ENCODE measurements at regions of chr19 and their contacts with region 1.

Region 1: GRCh38 chr19:46265217-46265828 is 31.5 kb upstream of the HIF3A start:
- DNase-seq: peak; percentile 39 to 70 (median 53)
- H3K4me3 ChIP-seq: no peak overlapping the region
- H3K27ac ChIP-seq: no peak overlapping the region
- H3K4me1 ChIP-seq: no peaks in the 10 kb centered on the region
- H3K27me3 ChIP-seq: no peaks in the 10 kb centered on the region
- CTCF ChIP-seq: peak; percentile 62 to 81 (median 75)
- EP300 ChIP-seq: no peak
- POLR2A ChIP-seq: no peak

Region 2: GRCh38 chr19:45973578-45974338 is 291.6 kb before region 1 on chr19 and contains the start of gene NOVA2:
- intact Hi-C with region 1: no loop called
- DNase-seq: peak in 4 of 5 donors; percentile 43 to 60 (median 50)
- H3K4me3 ChIP-seq: no peak within 1 kb of the TSS
- H3K27ac ChIP-seq: no peak within 1 kb of the TSS
- H3K4me1 ChIP-seq: no peaks in the 10 kb centered on the region
- H3K27me3 ChIP-seq: no peaks in the 10 kb centered on the region
- CTCF ChIP-seq: no peak
- EP300 ChIP-seq: no peak
- POLR2A ChIP-seq: no peak
- total RNA-seq, gene NOVA2: 0.23 to 4.8 (median 2.2) TPM

Region 3: DNA sequence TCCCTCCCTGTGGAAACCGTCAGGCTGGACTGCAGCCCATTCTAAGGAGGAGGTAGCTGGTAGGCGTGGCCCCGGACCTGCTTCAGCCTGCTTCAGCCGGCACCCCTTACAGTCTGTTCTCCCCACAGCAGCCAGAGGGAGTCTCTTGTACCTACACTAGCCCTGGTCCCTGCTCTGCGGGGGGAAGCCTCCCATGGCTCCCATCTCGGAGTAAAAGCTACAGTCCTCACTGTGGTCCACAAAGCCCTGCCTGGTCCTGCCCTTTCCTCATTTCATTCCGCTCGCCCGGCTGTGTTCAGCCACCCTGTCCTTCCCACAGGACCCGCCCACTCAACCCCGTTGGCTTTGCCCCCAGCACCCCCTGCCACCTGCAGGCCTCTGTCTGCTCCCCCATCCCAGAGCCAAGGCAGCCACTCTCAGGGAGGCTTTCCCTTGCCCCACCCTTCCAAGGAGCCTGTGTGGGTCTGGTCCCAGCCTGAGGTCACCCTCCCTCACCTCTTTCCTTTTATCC is 243.7 kb before region 1 on chr19:
- intact Hi-C with region 1: loop called in 1 of 4 experiments (anchors 5 kb)
- DNase-seq: no peak
- H3K4me3 ChIP-seq: no peak overlapping the region
- H3K27ac ChIP-seq: no peak overlapping the region
- H3K4me1 ChIP-seq: no peaks in the 10 kb centered on the region
- H3K27me3 ChIP-seq: no peaks in the 10 kb centered on the region
- CTCF ChIP-seq: no peak
- EP300 ChIP-seq: no peak
- POLR2A ChIP-seq: no peak

Region 4: DNA sequence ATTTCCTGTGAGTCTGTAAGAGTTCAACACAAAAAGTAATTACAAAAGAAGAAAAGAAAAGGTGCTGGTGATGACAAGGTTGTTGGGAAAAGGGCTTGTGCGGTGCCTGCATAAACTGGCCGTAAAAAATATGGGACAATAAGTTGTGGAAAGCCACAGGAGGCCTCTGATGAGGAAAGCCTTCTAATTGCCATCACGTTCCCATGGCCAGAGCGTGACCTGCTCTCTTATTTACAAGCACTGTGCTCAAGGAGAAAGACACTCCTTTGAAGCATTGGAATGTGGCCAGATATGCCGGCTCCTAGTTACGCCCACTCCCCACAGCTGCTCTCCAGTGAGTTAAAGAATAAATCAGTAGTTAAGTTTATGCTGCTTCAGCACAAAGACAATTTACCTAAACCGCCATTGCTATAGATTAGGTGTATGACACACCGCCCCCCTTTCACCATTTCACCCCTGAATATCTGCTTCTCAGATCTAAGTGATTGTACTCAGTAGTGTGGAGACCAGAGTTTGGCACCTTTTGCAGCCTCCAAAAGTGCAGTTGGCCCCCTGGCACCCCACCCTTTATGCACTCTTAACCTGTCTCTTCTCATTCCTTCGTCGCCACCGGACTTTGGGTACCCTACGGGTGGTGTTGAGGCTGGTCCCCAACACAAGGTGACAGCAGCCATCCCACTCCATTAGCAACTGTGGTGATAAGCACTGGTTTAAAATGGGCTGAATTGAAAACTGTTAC is 234.3 kb before region 1 on chr19:
- intact Hi-C with region 1: loop called (anchors 2 to 5 kb)
- DNase-seq: no peak
- H3K4me3 ChIP-seq: no peak overlapping the region
- H3K27ac ChIP-seq: no peak overlapping the region
- H3K4me1 ChIP-seq: no peaks in the 10 kb centered on the region
- H3K27me3 ChIP-seq: no peaks in the 10 kb centered on the region
- CTCF ChIP-seq: no peak
- EP300 ChIP-seq: no peak
- POLR2A ChIP-seq: no peak

Region 5: DNA sequence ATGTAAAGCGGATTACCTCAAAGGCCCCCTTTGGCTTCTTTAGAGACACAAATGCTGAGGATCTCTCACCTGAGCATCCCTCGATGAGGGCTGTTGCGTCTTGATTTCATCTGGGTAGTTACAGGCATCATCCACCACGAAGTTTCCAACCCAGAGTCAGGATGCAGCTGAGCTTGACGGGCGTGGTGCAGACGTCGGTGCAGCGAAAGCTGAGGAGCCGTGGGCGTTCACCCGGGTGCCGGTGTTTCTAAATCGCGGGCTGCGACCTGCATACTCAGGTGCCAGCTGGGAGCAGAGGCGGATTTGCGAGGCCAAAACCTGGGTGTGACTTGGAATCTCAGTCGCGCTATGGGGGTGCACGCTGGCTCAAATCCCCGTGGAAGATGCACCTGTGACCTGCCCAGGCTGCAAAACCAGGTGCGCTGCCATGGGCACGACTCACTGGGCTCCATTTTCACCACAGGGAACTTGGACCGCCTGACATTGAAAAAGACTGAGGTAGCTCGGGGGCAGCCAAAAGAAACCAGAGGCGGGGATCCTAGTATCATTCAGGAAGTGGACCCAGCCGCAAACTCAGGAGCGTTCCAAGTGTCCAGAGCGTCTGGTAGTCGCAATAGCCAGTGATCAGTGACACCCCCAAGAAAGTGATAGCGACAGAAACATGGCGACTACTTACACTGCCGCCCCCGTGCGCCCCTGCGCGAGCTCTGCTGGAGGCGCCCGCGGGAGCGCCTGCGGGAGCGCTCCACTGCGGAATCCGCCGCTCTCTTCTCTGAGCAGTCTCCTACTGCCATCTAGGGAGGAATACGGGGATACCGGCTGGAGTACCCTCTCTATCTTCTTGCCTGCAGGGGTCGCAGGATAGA is 188.1 kb before region 1 on chr19:
- intact Hi-C with region 1: loop called in 2 of 4 experiments (anchors 5 to 10 kb)
- DNase-seq: peak in 2 of 5 donors; percentile 23 to 40
- H3K4me3 ChIP-seq: peak overlapping the region; percentile 8
- H3K27ac ChIP-seq: no peak overlapping the region
- H3K4me1 ChIP-seq: peaks cover 3% of the 10 kb centered on the region
- H3K27me3 ChIP-seq: peaks cover 3% of the 10 kb centered on the region
- CTCF ChIP-seq: no peak
- EP300 ChIP-seq: no peak
- POLR2A ChIP-seq: no peak

Region 6: GRCh38 chr19:46192992-46193650 is 72.2 kb before region 1 on chr19:
- intact Hi-C with region 1: no loop called
- DNase-seq: no peak
- H3K4me3 ChIP-seq: no peak overlapping the region
- H3K27ac ChIP-seq: no peak overlapping the region
- H3K4me1 ChIP-seq: no peaks in the 10 kb centered on the region
- H3K27me3 ChIP-seq: no peaks in the 10 kb centered on the region
- CTCF ChIP-seq: no peak
- EP300 ChIP-seq: no peak
- POLR2A ChIP-seq: no peak

Region 7: DNA sequence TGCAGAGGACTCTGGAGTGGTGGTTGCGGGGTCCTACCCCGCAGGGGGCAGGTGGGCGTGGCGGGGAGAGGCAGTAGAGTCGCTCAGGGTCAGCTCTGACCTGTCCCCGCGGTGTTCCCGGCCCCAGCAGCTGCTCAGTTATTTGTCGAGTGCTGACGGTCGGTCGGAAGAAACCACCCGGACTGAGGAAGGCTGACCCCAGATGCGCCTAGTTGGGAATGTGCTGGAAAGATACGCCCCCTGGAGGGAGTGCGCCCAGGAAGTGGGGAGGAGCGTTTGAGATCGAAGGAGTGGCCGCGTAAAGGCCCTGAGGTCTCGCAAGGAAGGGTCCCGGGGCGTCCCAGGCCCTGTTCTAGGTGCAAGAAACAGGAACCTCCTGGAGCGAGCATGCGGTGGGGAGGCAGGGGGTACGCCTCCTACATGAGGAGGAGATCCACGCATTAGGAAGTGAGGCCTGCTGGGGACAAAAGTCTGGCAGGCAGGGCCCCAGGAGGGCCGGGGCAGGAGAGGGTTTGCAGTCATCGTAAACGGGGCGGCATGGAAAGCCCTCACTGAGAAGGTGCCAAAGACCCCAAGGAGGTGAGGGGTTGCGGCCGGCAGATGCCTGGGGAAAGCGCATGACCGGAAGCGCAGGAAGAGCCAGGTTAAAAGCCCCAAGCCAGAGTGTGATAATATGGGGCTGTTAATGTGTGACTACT is 138.9 kb after region 1 on chr19:
- intact Hi-C with region 1: no loop called
- DNase-seq: peak; percentile 64 to 82 (median 74)
- H3K4me3 ChIP-seq: peak overlapping the region; percentile 41
- H3K27ac ChIP-seq: peak overlapping the region; percentile 74 to 78
- H3K4me1 ChIP-seq: peaks cover 20% of the 10 kb centered on the region
- H3K27me3 ChIP-seq: no peaks in the 10 kb centered on the region
- CTCF ChIP-seq: no peak
- EP300 ChIP-seq: no peak
- POLR2A ChIP-seq: peak; percentile 26